Naive thymus-derived CD8-positive, alpha-beta T cell (primary cell): ENCODE measurements at regions of chr2 and their contacts with region 1.

Region 1: DNA sequence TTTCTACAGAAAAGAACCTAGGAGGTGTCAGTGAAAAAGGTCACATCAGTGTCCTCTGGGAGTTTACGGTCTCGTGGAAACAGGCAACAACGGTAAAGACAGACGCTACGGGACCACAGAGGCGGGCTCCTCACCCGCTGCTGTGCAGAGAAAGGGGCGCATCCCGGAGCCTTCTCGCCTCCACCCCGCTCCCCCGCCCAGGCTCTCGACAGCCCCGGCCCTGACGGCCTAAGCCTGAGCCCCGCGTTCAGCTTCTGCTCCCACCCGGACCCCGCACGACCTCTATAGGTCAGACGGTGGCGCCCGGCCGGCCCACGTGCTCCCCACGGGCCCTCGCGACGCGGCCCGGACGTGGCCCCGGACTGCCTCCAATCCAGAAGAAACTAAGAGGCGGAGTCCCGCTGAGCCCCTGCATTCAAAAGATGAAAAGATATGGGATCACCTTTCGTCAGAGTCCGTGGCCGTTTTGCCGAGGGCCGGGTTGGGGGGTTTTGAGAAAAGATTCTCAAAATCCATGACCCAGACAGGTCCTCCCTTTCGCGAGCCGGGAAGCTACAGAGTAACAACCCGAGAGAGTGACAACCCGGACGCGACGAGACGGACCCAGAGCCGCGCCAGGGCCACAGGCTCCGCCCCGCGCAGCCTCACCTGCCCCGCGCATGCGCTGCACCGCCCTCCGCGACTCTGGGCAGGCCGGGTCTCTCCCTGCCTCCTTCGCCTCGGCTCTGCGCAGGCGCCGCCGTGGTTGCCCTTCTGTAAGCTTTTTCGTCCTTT is at the start of gene ZC3H8:
- DNase-seq: peak; percentile 90 to 98 (median 96)
- ATAC-seq: peak; percentile 92 to 93
- H3K4me3 Mint-ChIP-seq: peak within 1 kb of the TSS; percentile 28 to 95 (median 88)
- H3K27ac Mint-ChIP-seq: peak within 1 kb of the TSS; percentile 43 to 98 (median 95)
- H3K4me1 Mint-ChIP-seq: peaks cover 12 to 27% (median 15%) of the 10 kb centered on the region in 4 donors
- H3K27me3 Mint-ChIP-seq: peaks cover 0 to 1% (median 0%) of the 10 kb centered on the region in 5 donors
- polyA plus RNA-seq, gene ZC3H8: 10.6 to 17.3 (median 11.9) TPM

Region 2: DNA sequence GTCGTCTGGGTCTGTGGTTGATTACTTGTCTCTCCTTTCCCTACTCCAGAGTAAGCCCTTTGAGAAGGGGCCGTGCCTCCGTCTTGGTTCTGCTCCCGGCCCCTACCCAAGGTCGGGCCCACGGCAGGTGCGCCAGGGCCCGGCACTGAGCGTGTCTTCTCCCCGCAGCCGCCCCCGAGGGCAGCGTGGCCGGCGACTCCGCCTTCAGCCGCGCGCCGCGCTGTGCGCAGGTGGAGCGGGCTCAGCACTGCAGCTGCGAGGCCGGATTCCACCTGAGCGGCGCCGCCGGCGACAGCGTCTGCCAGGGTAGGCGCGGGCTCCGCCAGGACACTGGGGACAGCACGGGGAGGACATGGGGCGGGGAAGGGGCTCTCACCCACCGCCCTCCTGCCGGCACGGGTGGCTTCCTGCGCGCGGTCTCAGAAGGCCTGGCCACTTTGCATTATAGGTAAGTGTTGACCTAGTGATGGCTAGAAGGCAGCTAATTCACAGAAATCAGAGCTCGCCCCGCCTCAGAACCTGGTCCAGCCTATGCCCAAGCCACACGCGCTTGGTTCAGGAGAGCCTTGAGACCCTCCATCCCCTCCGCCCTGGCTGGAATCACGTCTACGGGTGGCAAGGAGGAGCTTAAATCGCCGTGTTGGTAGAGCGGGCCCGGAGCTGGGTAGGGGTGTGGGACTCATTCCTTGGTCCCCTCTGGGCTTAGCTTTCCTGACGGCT is 72.9 kb before region 1 on chr2:
- POLR2A ChIA-PET with region 1: interaction called, 11 read pairs
- DNase-seq: peak; percentile 22 to 74 (median 48)
- ATAC-seq: peak; percentile 92 to 94
- H3K4me3 Mint-ChIP-seq: peak overlapping the region; percentile 29 to 84 (median 60)
- H3K27ac Mint-ChIP-seq: peak overlapping the region in 8 of 10 donors; percentile 15 to 97 (median 64)
- H3K4me1 Mint-ChIP-seq: peaks cover 10 to 38% (median 33%) of the 10 kb centered on the region in 4 donors
- H3K27me3 Mint-ChIP-seq: peaks cover 0 to 18% (median 4%) of the 10 kb centered on the region in 5 donors

Region 3: DNA sequence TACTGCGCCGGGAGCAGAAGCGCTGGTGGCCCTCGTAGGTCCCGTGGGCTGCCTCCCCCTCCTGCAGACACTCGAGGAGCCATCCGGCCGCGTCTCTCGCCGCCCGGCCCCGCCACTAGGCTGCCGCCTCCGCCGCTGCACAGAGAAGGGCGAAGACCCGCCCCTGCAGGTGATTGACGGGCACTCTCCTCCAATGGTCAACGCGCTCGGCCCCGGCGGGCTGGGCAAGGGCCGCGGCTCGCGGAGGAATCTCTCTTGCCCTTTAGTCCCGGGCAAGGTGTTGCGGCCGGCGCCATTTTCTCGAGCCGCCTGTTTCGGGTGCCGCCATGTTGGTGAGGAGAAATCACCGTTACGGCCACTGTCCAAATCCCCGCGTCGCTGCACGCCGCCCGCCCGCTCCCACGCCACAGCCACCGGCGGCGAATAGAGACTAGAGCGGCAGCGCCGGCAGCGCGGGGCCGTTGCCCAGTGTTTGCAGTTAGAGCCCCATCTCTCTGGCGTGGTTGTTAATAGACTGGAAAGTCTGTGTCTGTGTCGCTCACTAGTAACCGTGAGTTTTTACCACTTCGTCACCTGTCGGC is 20.7 kb after region 1 on chr2 and contains the start of gene ZC3H6:
- POLR2A ChIA-PET with region 1: interaction called, 22 read pairs
- DNase-seq: peak; percentile 95 to 100 (median 100)
- ATAC-seq: peak; percentile 88 to 92
- H3K4me3 Mint-ChIP-seq: peak within 1 kb of the TSS; percentile 85 to 97 (median 92)
- H3K27ac Mint-ChIP-seq: peak within 1 kb of the TSS; percentile 94 to 100 (median 99)
- H3K4me1 Mint-ChIP-seq: peaks cover 0 to 31% (median 18%) of the 10 kb centered on the region in 4 donors
- H3K27me3 Mint-ChIP-seq: no peaks in the 10 kb centered on the region
- polyA plus RNA-seq, gene ZC3H6: 5.0 to 10.3 (median 9.0) TPM

Region 4: DNA sequence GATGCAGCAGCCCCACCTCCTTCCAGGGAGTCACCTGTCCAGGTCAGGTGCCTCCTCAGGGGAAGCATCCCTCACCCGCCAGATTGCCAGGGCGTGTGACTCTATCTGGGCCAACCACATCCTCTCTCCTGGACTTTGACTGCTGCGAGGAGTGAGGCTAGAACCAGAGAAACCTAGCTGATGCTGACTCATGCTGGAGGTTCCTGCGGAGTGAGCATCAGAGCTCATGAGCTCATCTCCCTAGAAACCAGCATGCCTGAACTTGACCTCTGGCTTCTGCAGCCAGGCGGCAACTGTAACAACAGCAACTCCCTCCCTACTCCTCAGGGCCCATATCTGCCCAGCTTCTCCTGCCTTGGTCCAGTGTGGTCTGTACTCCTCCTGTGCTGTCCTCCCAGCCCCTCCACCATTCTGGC is 437.9 kb after region 1 on chr2:
- POLR2A ChIA-PET with region 1: no interaction called
- DNase-seq: peak in 1 of 10 donors; percentile 29
- ATAC-seq: peak in 1 of 2 donors; percentile 45
- H3K4me3 Mint-ChIP-seq: no peak overlapping the region
- H3K27ac Mint-ChIP-seq: peak overlapping the region in 5 of 10 donors; percentile 43 to 79 (median 49)
- H3K4me1 Mint-ChIP-seq: peaks cover 4 to 28% (median 15%) of the 10 kb centered on the region in 4 donors
- H3K27me3 Mint-ChIP-seq: peaks cover 0 to 2% (median 0%) of the 10 kb centered on the region in 5 donors